AG04450 (cell line): ENCODE measurements at regions of chr1 and their contacts with region 1.

Region 1: DNA sequence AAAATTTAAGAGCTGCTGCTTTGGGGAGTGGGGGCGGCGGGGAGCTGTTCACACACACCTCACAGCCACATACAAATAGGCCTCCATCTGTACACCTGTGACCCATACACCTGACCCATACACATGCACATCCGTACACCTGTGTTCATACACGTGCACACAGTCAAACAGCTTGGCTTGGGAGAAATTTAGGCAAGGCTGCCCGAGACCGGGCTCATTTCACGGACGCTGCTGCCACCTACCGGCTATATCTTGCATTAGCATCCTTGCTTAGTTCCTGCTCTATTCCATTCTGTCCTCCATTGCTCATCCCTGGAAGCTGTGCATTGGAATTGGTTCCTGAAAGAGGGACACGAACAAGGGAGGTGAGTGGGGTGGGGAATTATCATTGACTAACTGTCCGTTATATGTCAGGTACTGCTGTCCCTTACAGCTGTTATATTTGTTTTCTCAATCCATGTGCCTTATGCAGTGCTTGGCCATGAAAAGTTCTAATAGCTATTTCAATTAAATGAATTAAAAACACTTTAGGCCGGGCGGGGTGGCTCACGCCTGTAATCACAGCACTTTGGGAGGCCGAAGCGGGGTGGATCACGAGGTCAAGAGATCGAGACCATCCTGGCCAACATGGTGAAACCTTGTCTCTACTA is 37.1 kb upstream of the EPB41 start:
- DNase-seq: peak; percentile 23
- H3K4me3 ChIP-seq: no peak overlapping the region
- H3K27ac ChIP-seq: no peak overlapping the region
- H3K27me3 ChIP-seq: peaks cover 7% of the 10 kb centered on the region
- CTCF ChIP-seq: peak; percentile 94

Region 2: GRCh38 chr1:28642847-28643635 is 234.2 kb before region 1 on chr1 and contains the start of gene TAF12:
- CTCF ChIA-PET with region 1: interaction called, 25 read pairs
- POLR2A ChIA-PET with region 1: interaction called, 22 read pairs
- DNase-seq: peak; percentile 86
- H3K4me3 ChIP-seq: peak within 1 kb of the TSS; percentile 98
- H3K27ac ChIP-seq: peak within 1 kb of the TSS; percentile 89
- H3K27me3 ChIP-seq: no peaks in the 10 kb centered on the region
- CTCF ChIP-seq: peak; percentile 30; the same call in 1 of the 2 replicates
- polyA plus RNA-seq, gene TAF12: 50.2 and 54.2 TPM in 2 replicates

Region 3: GRCh38 chr1:28756846-28757245 is 120.4 kb before region 1 on chr1:
- CTCF ChIA-PET with region 1: interaction called, 11 read pairs
- POLR2A ChIA-PET with region 1: no interaction called
- DNase-seq: no peak
- H3K4me3 ChIP-seq: no peak overlapping the region
- H3K27ac ChIP-seq: no peak overlapping the region
- H3K27me3 ChIP-seq: no peaks in the 10 kb centered on the region
- CTCF ChIP-seq: peak; percentile 13; the same call in 1 of the 2 replicates

Region 4: DNA sequence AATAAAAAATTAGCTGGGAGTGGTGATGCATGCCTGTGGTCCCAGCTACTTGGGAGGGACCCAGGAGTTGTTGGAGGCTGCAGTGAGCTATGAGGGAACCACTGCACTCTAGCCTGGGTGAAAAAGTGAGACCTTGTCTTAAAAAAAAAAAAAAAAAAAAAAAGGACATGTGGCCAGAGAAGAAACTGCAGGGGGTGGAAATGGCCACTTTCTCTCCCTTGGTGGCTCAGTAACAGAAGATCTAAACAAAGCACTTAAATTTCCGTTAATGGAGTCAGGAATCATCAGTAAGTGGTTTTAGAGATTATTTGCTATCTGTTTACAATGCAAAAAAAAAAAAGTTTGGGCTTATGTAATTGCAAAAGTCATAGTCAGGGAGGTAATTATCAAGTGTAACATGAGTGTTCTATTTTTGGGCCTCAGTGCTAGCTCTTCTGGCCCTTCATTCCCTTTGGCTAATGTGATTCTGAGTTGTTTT is 84.6 kb before region 1 on chr1:
- CTCF ChIA-PET with region 1: interaction called, 318 read pairs
- POLR2A ChIA-PET with region 1: no interaction called
- DNase-seq: no peak
- H3K4me3 ChIP-seq: no peak overlapping the region
- H3K27ac ChIP-seq: no peak overlapping the region
- H3K27me3 ChIP-seq: peaks cover 21% of the 10 kb centered on the region
- CTCF ChIP-seq: peak; percentile 14; the same call in 1 of the 2 replicates

Region 5: GRCh38 chr1:29202584-29203340 is 325.5 kb after region 1 on chr1:
- CTCF ChIA-PET with region 1: interaction called, 108 read pairs
- POLR2A ChIA-PET with region 1: interaction called, 7 read pairs
- DNase-seq: peak; percentile 98
- H3K4me3 ChIP-seq: no peak overlapping the region
- H3K27ac ChIP-seq: peak overlapping the region; percentile 92
- H3K27me3 ChIP-seq: no peaks in the 10 kb centered on the region
- CTCF ChIP-seq: peak; percentile 95